ENCODE measurements at regions of chr10 and their contacts with region 1.

Region 1: GRCh38 chr10:11698691-11699549 is 43.3 kb upstream of the ECHDC3 start:
- DNase-seq: peak; percentile 71
- ATAC-seq: peak; percentile 75
- H3K4me3 ChIP-seq: peak overlapping the region in 1 of 5 experiments; percentile 8
- H3K4me3 Mint-ChIP-seq: peak overlapping the region; percentile 46
- H3K27ac ChIP-seq: peak overlapping the region; percentile 25 to 70
- H3K27ac Mint-ChIP-seq: peak overlapping the region; percentile 73
- H3K4me1 ChIP-seq: peaks cover 41 to 64% of the 10 kb centered on the region in 2 donors
- H3K4me1 Mint-ChIP-seq: peaks cover 60% of the 10 kb centered on the region
- H3K27me3 ChIP-seq: no peaks in the 10 kb centered on the region
- H3K27me3 Mint-ChIP-seq: no peaks in the 10 kb centered on the region
- CTCF ChIP-seq: no peak

Region 2: DNA sequence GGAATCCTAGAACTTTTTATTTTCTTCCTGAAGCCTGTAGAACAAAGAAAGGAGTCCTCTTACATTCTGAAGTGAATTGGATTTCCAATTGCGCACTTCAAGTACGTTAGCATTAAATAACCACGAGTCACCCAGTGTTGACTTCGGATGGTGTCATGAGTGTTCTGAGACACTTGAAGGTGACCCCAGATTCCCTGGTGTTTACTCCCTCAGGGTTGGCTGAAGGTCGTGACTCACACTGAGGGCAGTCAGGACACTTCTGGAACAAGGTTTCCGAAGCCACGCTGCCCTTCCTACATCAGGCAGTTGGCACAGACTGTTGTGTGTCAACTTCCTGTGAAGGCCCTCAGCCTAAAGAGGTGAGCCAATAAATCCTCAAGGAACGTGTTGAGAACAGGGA is 867.8 kb before region 1 on chr10:
- CTCF ChIA-PET with region 1: no interaction called
- POLR2A ChIA-PET with region 1: no interaction called
- intact Hi-C with region 1: no loop called
- DNase-seq: no peak
- ATAC-seq: no peak
- H3K4me3 ChIP-seq: no peak overlapping the region
- H3K4me3 Mint-ChIP-seq: no peak overlapping the region
- H3K27ac ChIP-seq: no peak overlapping the region
- H3K27ac Mint-ChIP-seq: no peak overlapping the region
- H3K4me1 ChIP-seq: no peaks in the 10 kb centered on the region
- H3K4me1 Mint-ChIP-seq: no peaks in the 10 kb centered on the region
- H3K27me3 ChIP-seq: no peaks in the 10 kb centered on the region
- H3K27me3 Mint-ChIP-seq: peaks cover 12% of the 10 kb centered on the region
- CTCF ChIP-seq: no peak

Region 3: DNA sequence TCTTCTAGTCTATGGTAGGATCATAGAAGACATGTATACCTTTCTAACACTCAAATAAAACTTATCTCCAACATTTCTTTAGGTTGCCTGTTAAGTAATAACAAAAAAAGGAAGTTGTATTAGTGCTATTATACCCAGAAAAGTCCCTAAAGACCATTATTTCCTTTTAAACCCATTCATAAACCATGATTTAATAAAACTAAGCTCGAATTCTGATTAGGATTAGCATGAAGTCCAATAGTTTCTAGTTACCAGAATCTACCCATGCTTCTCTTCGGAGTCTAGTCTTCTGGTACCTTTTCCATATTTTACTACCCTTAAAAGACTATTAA is 150.2 kb before region 1 on chr10:
- CTCF ChIA-PET with region 1: no interaction called
- POLR2A ChIA-PET with region 1: no interaction called
- intact Hi-C with region 1: no loop called
- DNase-seq: peak; percentile 52
- ATAC-seq: peak; percentile 19
- H3K4me3 ChIP-seq: no peak overlapping the region
- H3K4me3 Mint-ChIP-seq: peak overlapping the region; percentile 64
- H3K27ac ChIP-seq: peak overlapping the region; percentile 7 to 82
- H3K27ac Mint-ChIP-seq: peak overlapping the region; percentile 26
- H3K4me1 ChIP-seq: peaks cover 54 to 70% of the 10 kb centered on the region in 2 donors
- H3K4me1 Mint-ChIP-seq: peaks cover 84% of the 10 kb centered on the region
- H3K27me3 ChIP-seq: no peaks in the 10 kb centered on the region
- H3K27me3 Mint-ChIP-seq: no peaks in the 10 kb centered on the region
- CTCF ChIP-seq: no peak

Region 4: DNA sequence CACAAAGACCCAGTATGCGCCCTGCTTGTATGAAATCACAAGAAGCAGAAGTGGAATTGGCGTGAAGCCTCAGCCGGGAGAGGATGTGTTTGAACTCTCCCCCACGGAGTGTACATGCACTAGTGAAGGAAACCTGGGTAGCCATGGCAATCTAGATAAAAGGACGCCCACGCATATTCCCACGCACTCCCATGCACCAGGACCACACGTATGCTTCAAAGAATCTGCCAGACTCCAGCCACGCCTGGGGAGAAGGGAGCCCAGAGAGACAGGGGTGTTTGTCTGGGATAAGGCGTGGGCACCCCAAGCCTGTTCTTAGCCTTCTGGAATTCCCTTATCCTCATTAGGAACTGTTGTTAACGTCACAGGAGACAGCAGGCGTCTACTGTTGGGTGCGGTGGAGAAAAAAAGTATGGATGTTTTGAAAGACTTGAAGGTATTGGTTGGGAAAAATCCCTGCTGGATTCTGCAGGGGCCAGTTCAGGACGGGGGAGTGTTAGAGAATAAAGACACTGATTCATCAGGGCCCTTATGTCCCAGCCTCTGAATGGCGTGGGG is 14.3 kb after region 1 on chr10:
- CTCF ChIA-PET with region 1: interaction called, 5 read pairs
- POLR2A ChIA-PET with region 1: interaction called, 4 read pairs
- intact Hi-C with region 1: loop called (anchors 1 kb)
- DNase-seq: peak; percentile 34
- ATAC-seq: no peak
- H3K4me3 ChIP-seq: no peak overlapping the region
- H3K4me3 Mint-ChIP-seq: peak overlapping the region; percentile 18
- H3K27ac ChIP-seq: no peak overlapping the region
- H3K27ac Mint-ChIP-seq: peak overlapping the region; percentile 24
- H3K4me1 ChIP-seq: peaks cover 42 to 61% of the 10 kb centered on the region in 2 donors
- H3K4me1 Mint-ChIP-seq: peaks cover 51% of the 10 kb centered on the region
- H3K27me3 ChIP-seq: no peaks in the 10 kb centered on the region
- H3K27me3 Mint-ChIP-seq: no peaks in the 10 kb centered on the region
- CTCF ChIP-seq: no peak